GM12878 (cell line): ENCODE measurements at regions of chr5 and their contacts with region 1.

Region 1: GRCh38 chr5:143002459-143003328 is 232.5 kb downstream of the ARHGAP26 start:
- DNase-seq: peak; percentile 82
- ATAC-seq: peak; percentile 78
- H3K4me3 ChIP-seq: no peak overlapping the region
- H3K27ac ChIP-seq: peak overlapping the region; percentile 89
- H3K4me1 ChIP-seq: peaks cover 49% of the 10 kb centered on the region
- H3K27me3 ChIP-seq: no peaks in the 10 kb centered on the region
- CTCF ChIP-seq: peak; percentile 71 to 79 (median 75)
- EP300 ChIP-seq: peak; percentile 95 to 97
- POLR2A ChIP-seq: peak; percentile 47; the same call in 1 of the 2 replicates
- RAD21 ChIP-seq: peak; percentile 86

Region 2: DNA sequence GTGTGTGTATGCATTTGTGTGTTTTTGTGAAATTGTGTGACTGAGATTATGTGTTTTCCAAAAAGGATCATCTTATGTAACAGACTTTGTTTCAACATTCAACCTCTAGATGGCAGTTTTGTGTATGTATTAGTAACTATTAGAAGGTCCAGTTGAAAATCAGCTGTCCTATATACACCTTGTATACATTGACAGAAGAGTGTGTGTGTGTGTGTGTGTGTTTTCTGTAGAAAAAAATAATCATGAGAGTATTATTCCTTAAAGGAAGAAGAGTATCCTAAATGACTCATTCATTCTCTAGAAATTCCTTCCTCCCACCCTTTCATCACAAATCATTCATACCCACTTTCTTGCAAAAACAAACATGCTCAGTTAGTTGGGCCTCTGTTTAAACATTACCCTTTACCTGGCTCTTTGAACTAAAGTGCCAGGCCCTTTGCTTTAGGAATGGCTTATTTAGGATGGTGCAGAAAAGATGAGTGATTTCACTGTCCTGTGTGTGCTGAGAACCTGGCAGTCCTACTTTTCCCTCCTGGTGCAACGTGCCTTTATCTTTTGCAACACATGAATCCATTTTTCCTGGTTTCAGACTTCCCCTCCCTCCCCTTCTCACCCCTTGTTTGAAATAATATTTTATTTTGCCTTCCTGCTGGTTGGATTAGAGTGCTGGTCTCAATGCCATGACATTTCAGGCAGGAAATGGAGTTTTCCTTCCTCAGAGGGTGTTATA is 80.3 kb before region 1 on chr5:
- CTCF ChIA-PET with region 1: interaction called, 78 read pairs
- POLR2A ChIA-PET with region 1: no interaction called
- RAD21 ChIA-PET with region 1: interaction called, 129 read pairs
- SMC1A ChIA-PET with region 1: interaction called, 149 read pairs
- in situ Hi-C with region 1: loop called (anchors 10 kb)
- intact Hi-C with region 1: no loop called
- DNase-seq: peak; percentile 21
- ATAC-seq: peak; percentile 92
- H3K4me3 ChIP-seq: no peak overlapping the region
- H3K27ac ChIP-seq: no peak overlapping the region
- H3K4me1 ChIP-seq: no peaks in the 10 kb centered on the region
- H3K27me3 ChIP-seq: no peaks in the 10 kb centered on the region
- CTCF ChIP-seq: peak; percentile 41 to 66 (median 48); a peak in 4 of 6 replicates
- EP300 ChIP-seq: no peak
- POLR2A ChIP-seq: no peak
- RAD21 ChIP-seq: peak; percentile 68

Region 3: GRCh38 chr5:143023411-143024096 is 20.9 kb after region 1 on chr5:
- CTCF ChIA-PET with region 1: interaction called, 19 read pairs
- POLR2A ChIA-PET with region 1: interaction called, 18 read pairs
- RAD21 ChIA-PET with region 1: interaction called, 37 read pairs
- SMC1A ChIA-PET with region 1: interaction called, 114 read pairs
- in situ Hi-C with region 1: no loop called
- intact Hi-C with region 1: loop called (anchors 2 kb)
- DNase-seq: peak; percentile 87
- ATAC-seq: peak; percentile 65
- H3K4me3 ChIP-seq: 0 out of 2 replicates have a peak overlapping the region, but pooled peaks have one; percentile 21
- H3K27ac ChIP-seq: peak overlapping the region; percentile 95
- H3K4me1 ChIP-seq: peaks cover 77% of the 10 kb centered on the region
- H3K27me3 ChIP-seq: no peaks in the 10 kb centered on the region
- CTCF ChIP-seq: no peak; a peak in 1 of 6 replicates
- EP300 ChIP-seq: peak; percentile 52 to 66; a peak in 2 of 4 replicates
- POLR2A ChIP-seq: peak; percentile 60
- RAD21 ChIP-seq: peak; percentile 36

Region 4: DNA sequence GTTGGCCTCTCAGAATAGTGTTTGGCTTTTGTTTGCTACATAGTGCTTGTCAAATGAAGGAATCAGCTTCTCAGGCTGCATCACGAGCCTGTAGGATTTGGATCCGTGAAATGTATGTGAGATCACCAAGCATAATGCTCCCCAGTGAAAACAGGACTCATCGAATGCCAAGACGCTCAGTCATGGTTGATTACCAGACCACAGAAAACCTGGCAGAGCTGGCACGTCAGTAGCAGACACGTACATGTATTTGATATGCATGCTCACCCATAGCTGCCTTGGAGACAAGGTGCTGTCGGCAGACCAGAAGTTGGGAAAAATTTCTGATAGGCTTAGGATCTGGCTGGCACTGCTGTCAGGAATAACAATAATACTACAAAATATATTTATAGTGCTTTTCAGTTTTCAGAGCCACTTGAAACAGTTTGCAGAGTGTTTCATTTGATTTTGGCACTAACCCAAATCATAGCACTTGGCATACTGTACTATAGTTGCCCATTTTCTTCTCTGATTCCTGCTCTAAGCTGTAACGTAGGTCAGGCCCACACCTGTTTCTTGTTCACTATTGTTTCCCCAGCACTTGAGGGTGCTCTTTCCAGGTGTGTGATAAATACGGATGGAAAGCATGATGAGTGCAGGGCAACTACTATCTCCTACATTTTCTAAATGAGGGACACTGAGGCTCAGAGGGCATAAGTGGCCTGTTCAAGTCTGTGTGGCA is 174.7 kb after region 1 on chr5:
- CTCF ChIA-PET with region 1: interaction called, 13 read pairs
- POLR2A ChIA-PET with region 1: interaction called, 4 read pairs
- RAD21 ChIA-PET with region 1: interaction called, 84 read pairs
- SMC1A ChIA-PET with region 1: interaction called, 18 read pairs
- in situ Hi-C with region 1: no loop called
- intact Hi-C with region 1: no loop called
- DNase-seq: no peak
- ATAC-seq: no peak
- H3K4me3 ChIP-seq: no peak overlapping the region
- H3K27ac ChIP-seq: no peak overlapping the region
- H3K4me1 ChIP-seq: peaks cover 8% of the 10 kb centered on the region
- H3K27me3 ChIP-seq: no peaks in the 10 kb centered on the region
- CTCF ChIP-seq: no peak
- EP300 ChIP-seq: no peak
- POLR2A ChIP-seq: no peak
- RAD21 ChIP-seq: no peak

Region 5: GRCh38 chr5:143222287-143223231 is 219.9 kb after region 1 on chr5:
- CTCF ChIA-PET with region 1: interaction called, 4 read pairs
- POLR2A ChIA-PET with region 1: interaction called, 12 read pairs
- RAD21 ChIA-PET with region 1: interaction called, 49 read pairs
- SMC1A ChIA-PET with region 1: interaction called, 87 read pairs
- in situ Hi-C with region 1: no loop called
- intact Hi-C with region 1: no loop called
- DNase-seq: peak; percentile 82
- ATAC-seq: peak; percentile 70
- H3K4me3 ChIP-seq: no peak overlapping the region
- H3K27ac ChIP-seq: peak overlapping the region; percentile 100
- H3K4me1 ChIP-seq: peaks cover 60% of the 10 kb centered on the region
- H3K27me3 ChIP-seq: no peaks in the 10 kb centered on the region
- CTCF ChIP-seq: no peak
- EP300 ChIP-seq: 0 out of 4 replicates have a peak, but pooled peaks of 1 of the 2 experiments have one; percentile 50
- POLR2A ChIP-seq: peak; percentile 50; the same call in 1 of the 2 replicates
- RAD21 ChIP-seq: no peak; the same call in 1 of the 2 replicates

Region 6: GRCh38 chr5:143435210-143435657 is 432.5 kb after region 1 on chr5:
- CTCF ChIA-PET with region 1: interaction called, 8 read pairs
- POLR2A ChIA-PET with region 1: interaction called, 3 read pairs
- RAD21 ChIA-PET with region 1: interaction called, 14 read pairs
- SMC1A ChIA-PET with region 1: interaction called, 6 read pairs
- in situ Hi-C with region 1: no loop called
- intact Hi-C with region 1: no loop called
- DNase-seq: peak; percentile 98
- ATAC-seq: peak; percentile 81
- H3K4me3 ChIP-seq: peak overlapping the region; percentile 49; the same call in 1 of the 2 replicates
- H3K27ac ChIP-seq: peak overlapping the region; percentile 89
- H3K4me1 ChIP-seq: peaks cover 16% of the 10 kb centered on the region
- H3K27me3 ChIP-seq: no peaks in the 10 kb centered on the region
- CTCF ChIP-seq: no peak
- EP300 ChIP-seq: peak; percentile 88 to 96
- POLR2A ChIP-seq: 0 out of 2 replicates have a peak, but pooled peaks have one; percentile 33
- RAD21 ChIP-seq: peak; percentile 42; the same call in 1 of the 2 replicates